ENCODE measurements at regions of chr19 and their contacts with region 1.

Region 1: GRCh38 chr19:39671738-39672363 is 16.1 kb downstream of the LGALS16 start:
- DNase-seq: peak; percentile 50 to 60 (median 59)
- H3K4me3 ChIP-seq: no peak overlapping the region
- H3K4me3 Mint-ChIP-seq: peak overlapping the region in 3 of 8 donors; percentile 5 to 20 (median 17)
- H3K27ac ChIP-seq: no peak overlapping the region
- H3K27ac Mint-ChIP-seq: peak overlapping the region in 1 of 7 donors; percentile 9
- H3K4me1 ChIP-seq: peaks cover 24% of the 10 kb centered on the region
- H3K4me1 Mint-ChIP-seq: peaks cover 5 to 33% (median 19%) of the 10 kb centered on the region in 4 donors
- H3K27me3 ChIP-seq: no peaks in the 10 kb centered on the region
- H3K27me3 Mint-ChIP-seq: peaks cover 6 to 10% of the 10 kb centered on the region in 2 donors

Region 2: GRCh38 chr19:39480337-39481228 is 191.3 kb before region 1 on chr19 and contains the start of gene TIMM50:
- CTCF ChIA-PET with region 1: interaction called, 6 read pairs
- POLR2A ChIA-PET with region 1: no interaction called
- intact Hi-C with region 1: loop called (anchors 1 kb)
- DNase-seq: peak; percentile 93 to 96 (median 94)
- H3K4me3 ChIP-seq: peak within 1 kb of the TSS; percentile 83 to 93
- H3K4me3 Mint-ChIP-seq: peak within 1 kb of the TSS; percentile 90 to 96 (median 94)
- H3K27ac ChIP-seq: peak within 1 kb of the TSS; percentile 82
- H3K27ac Mint-ChIP-seq: peak within 1 kb of the TSS; percentile 92 to 98 (median 96)
- H3K4me1 ChIP-seq: peaks cover 17% of the 10 kb centered on the region
- H3K4me1 Mint-ChIP-seq: peaks cover 15 to 41% (median 25%) of the 10 kb centered on the region in 4 donors
- H3K27me3 ChIP-seq: no peaks in the 10 kb centered on the region
- H3K27me3 Mint-ChIP-seq: no peaks in the 10 kb centered on the region
- total RNA-seq, gene TIMM50: 47.2 to 49.6 TPM

Region 3: GRCh38 chr19:39502640-39503417 is 169.0 kb before region 1 on chr19:
- CTCF ChIA-PET with region 1: no interaction called
- POLR2A ChIA-PET with region 1: no interaction called
- intact Hi-C with region 1: loop called (anchors 1 kb)
- DNase-seq: peak; percentile 72 to 82 (median 81)
- H3K4me3 ChIP-seq: no peak overlapping the region
- H3K4me3 Mint-ChIP-seq: peak overlapping the region in 4 of 8 donors; percentile 9 to 61 (median 40)
- H3K27ac ChIP-seq: no peak overlapping the region
- H3K27ac Mint-ChIP-seq: peak overlapping the region in 2 of 7 donors; percentile 36 to 71
- H3K4me1 ChIP-seq: peaks cover 36% of the 10 kb centered on the region
- H3K4me1 Mint-ChIP-seq: peaks cover 24 to 65% (median 33%) of the 10 kb centered on the region in 4 donors
- H3K27me3 ChIP-seq: peaks cover 34% of the 10 kb centered on the region
- H3K27me3 Mint-ChIP-seq: peaks cover 45 to 59% of the 10 kb centered on the region in 2 donors

Region 4: DNA sequence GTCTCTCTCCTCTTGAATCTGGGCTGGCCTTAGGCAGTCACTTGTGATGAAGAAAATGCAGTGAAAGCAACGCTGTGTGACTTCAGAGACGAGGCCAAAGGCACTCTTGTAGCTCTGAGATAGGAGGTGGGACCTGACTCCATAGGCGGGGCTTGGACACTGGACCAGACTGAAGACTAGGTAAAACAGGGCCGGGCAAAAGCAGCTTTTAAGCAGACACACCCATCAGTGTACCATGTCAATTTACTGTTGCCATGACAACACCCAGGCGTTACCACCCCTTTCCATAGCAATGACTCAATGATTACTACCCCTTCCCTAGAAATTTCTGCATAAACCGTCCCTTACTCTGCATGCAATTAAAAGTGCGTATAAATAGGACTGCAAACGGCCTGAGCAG is 125.3 kb before region 1 on chr19:
- CTCF ChIA-PET with region 1: interaction called, 100 read pairs
- POLR2A ChIA-PET with region 1: interaction called, 4 read pairs
- intact Hi-C with region 1: loop called (anchors 1 kb)
- DNase-seq: no peak
- H3K4me3 ChIP-seq: no peak overlapping the region
- H3K4me3 Mint-ChIP-seq: peak overlapping the region in 2 of 8 donors; percentile 30 to 32
- H3K27ac ChIP-seq: no peak overlapping the region
- H3K27ac Mint-ChIP-seq: peak overlapping the region in 4 of 7 donors; percentile 47 to 82 (median 62)
- H3K4me1 ChIP-seq: peaks cover 45% of the 10 kb centered on the region
- H3K4me1 Mint-ChIP-seq: peaks cover 25 to 50% (median 37%) of the 10 kb centered on the region in 4 donors
- H3K27me3 ChIP-seq: no peaks in the 10 kb centered on the region
- H3K27me3 Mint-ChIP-seq: peaks cover 0 to 2% of the 10 kb centered on the region in 2 donors

Region 5: DNA sequence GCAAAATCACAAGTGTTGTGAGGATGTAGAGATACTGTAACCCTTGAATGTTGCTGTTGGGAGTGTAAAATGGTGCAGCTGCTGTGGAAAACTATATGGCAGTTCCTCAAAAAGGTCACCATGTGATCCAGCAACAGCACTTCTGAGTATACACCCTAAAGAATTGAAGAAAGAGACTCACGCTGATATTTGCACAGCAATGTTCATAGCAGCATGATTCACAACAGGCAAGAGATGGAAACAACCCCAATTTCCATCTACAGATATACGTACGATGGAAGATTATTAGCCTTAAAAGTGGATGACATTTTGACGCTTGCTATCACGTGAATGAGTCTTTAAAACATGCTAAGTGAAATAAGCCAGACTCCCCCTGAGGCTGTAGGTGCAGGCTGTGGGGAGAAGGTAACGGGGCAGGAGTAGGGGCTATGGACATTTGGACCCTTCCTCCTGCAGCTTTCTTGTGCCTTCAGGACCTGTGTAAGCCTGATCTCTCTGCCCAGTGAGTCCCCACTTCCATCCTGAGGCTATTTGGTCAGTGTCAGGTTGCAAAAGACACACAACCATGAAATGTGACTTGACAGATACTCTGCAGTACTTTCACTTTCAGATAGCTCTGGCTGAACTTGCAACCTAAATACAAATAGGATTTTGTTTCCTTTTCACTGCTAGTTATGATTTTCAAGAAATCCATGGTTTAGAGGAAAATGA is 114.3 kb before region 1 on chr19:
- CTCF ChIA-PET with region 1: interaction called, 100 read pairs
- POLR2A ChIA-PET with region 1: no interaction called
- intact Hi-C with region 1: loop called (anchors 2 kb)
- DNase-seq: peak in 1 of 5 donors; percentile 15
- H3K4me3 ChIP-seq: peak overlapping the region; percentile 37 to 41
- H3K4me3 Mint-ChIP-seq: peak overlapping the region; percentile 79 to 93 (median 85)
- H3K27ac ChIP-seq: peak overlapping the region; percentile 16
- H3K27ac Mint-ChIP-seq: peak overlapping the region; percentile 77 to 99 (median 96)
- H3K4me1 ChIP-seq: peaks cover 23% of the 10 kb centered on the region
- H3K4me1 Mint-ChIP-seq: peaks cover 21 to 25% (median 22%) of the 10 kb centered on the region in 4 donors
- H3K27me3 ChIP-seq: no peaks in the 10 kb centered on the region
- H3K27me3 Mint-ChIP-seq: no peaks in the 10 kb centered on the region

Region 6: DNA sequence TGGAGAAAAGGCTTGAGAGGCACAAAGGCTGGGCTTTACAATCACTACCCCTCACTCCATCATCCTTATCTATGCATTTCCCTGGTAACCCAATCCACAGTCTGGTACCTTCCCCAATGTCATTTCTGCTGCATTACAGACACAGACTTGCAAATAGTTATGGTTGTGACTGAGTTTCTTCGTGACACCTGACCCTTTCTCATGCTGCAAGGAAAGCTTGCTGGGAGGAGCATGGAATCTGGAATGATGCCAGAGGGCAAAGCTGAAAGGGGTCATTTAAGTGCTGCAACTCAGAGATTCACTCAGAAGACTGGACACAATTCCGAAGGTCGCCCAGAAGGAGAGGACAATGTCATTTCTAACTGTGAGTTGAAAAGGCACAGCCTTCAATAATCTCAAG is 16.2 kb before region 1 on chr19 and contains the start of gene LGALS16:
- CTCF ChIA-PET with region 1: no interaction called
- POLR2A ChIA-PET with region 1: no interaction called
- intact Hi-C with region 1: no loop called
- DNase-seq: no peak
- H3K4me3 ChIP-seq: no peak within 1 kb of the TSS
- H3K4me3 Mint-ChIP-seq: no peak within 1 kb of the TSS
- H3K27ac ChIP-seq: no peak within 1 kb of the TSS
- H3K27ac Mint-ChIP-seq: no peak within 1 kb of the TSS
- H3K4me1 ChIP-seq: no peaks in the 10 kb centered on the region
- H3K4me1 Mint-ChIP-seq: no peaks in the 10 kb centered on the region
- H3K27me3 ChIP-seq: no peaks in the 10 kb centered on the region
- H3K27me3 Mint-ChIP-seq: peaks cover 16 to 27% of the 10 kb centered on the region in 2 donors
- total RNA-seq, gene LGALS16: not detected

Region 7: DNA sequence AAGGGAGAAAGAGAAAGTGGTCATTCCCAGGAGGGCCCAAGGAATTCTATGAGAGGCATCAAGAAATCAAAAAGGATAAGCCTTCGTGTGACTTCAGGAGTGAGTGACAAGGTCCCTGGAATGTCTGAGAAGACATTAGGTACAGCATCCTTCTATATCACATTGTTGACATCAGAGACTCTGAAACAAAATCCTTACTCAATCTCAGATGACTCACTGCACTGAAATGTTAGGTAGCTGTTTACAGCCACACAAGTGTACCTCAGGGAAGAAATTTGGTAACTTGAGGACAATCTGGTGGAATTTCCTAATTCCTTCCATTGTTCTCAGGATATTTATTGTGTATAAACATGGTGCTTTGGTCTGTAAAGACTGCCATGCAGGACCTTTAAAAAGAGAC is 24.6 kb after region 1 on chr19:
- CTCF ChIA-PET with region 1: no interaction called
- POLR2A ChIA-PET with region 1: no interaction called
- intact Hi-C with region 1: no loop called
- DNase-seq: no peak
- H3K4me3 ChIP-seq: no peak overlapping the region
- H3K4me3 Mint-ChIP-seq: no peak overlapping the region
- H3K27ac ChIP-seq: no peak overlapping the region
- H3K27ac Mint-ChIP-seq: no peak overlapping the region
- H3K4me1 ChIP-seq: no peaks in the 10 kb centered on the region
- H3K4me1 Mint-ChIP-seq: peaks cover 0 to 3% (median 0%) of the 10 kb centered on the region in 4 donors
- H3K27me3 ChIP-seq: no peaks in the 10 kb centered on the region
- H3K27me3 Mint-ChIP-seq: peaks cover 4 to 11% of the 10 kb centered on the region in 2 donors

Region 8: DNA sequence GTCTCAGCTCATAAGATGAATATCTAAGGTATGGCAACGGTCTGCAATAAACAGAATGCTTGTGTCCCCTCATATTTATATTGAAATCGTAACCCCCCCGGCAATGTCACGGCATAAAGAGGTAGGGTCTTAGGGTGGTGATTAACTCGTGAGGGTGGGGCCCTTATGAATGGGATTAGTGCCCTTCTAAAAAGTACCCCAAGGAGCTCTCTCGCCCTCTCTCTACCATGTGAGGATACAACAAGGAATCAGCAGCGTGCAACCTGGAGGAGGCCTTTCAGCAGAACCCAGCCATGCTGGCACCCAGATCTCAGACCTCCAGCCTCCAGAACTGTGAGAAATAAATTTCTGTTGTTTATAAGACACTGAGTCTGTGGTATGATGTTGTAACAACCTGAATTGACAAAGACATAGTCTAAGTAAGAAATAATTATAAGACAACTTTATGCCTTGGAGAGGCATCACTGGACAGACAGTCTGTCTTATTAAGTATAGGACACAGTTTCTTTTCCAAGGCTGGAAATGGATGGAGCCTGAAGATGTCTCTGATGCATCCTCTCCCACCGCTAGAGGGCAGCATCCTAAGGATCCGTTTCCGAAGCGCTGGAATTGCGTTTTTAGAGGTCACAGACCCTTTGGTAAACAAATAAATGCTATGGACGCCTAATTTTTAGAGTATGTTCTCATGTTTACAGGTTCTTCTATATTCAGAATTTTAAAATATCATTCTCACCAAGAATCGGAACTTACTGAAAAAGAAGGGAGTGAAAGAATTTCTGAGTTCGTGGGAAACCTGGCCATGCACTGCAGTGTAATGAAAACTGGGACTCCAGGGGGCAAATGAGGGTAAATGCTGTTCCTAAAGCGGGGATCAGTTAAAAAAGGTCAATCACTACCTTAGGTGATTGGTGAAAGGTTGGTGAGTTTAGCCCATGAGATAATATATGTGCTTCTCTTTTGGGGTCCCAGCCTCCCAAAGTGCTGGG is 93.5 kb after region 1 on chr19:
- CTCF ChIA-PET with region 1: interaction called, 9 read pairs
- POLR2A ChIA-PET with region 1: no interaction called
- intact Hi-C with region 1: loop called (anchors 5 kb)
- DNase-seq: peak in 3 of 5 donors; percentile 14 to 20 (median 16)
- H3K4me3 ChIP-seq: no peak overlapping the region
- H3K4me3 Mint-ChIP-seq: no peak overlapping the region
- H3K27ac ChIP-seq: no peak overlapping the region
- H3K27ac Mint-ChIP-seq: no peak overlapping the region
- H3K4me1 ChIP-seq: no peaks in the 10 kb centered on the region
- H3K4me1 Mint-ChIP-seq: peaks cover 0 to 1% (median 0%) of the 10 kb centered on the region in 4 donors
- H3K27me3 ChIP-seq: no peaks in the 10 kb centered on the region
- H3K27me3 Mint-ChIP-seq: peaks cover under 1 to 1% of the 10 kb centered on the region in 2 donors

Region 9: GRCh38 chr19:39889872-39890545 is 218.2 kb after region 1 on chr19:
- CTCF ChIA-PET with region 1: no interaction called
- POLR2A ChIA-PET with region 1: no interaction called
- intact Hi-C with region 1: no loop called
- DNase-seq: no peak
- H3K4me3 ChIP-seq: no peak overlapping the region
- H3K4me3 Mint-ChIP-seq: no peak overlapping the region
- H3K27ac ChIP-seq: no peak overlapping the region
- H3K27ac Mint-ChIP-seq: peak overlapping the region in 2 of 7 donors; percentile 3 to 52
- H3K4me1 ChIP-seq: no peaks in the 10 kb centered on the region
- H3K4me1 Mint-ChIP-seq: no peaks in the 10 kb centered on the region
- H3K27me3 ChIP-seq: no peaks in the 10 kb centered on the region
- H3K27me3 Mint-ChIP-seq: no peaks in the 10 kb centered on the region

Measured in CD4-positive, alpha-beta memory T cell (primary cell).